ENCODE measurements at regions of chr14 and their contacts with region 1.

Region 1: GRCh38 chr14:54805521-54806322 is 96.9 kb downstream of the GCH1 start:
- DNase-seq: peak; percentile 84
- ATAC-seq: peak; percentile 86
- H3K4me3 ChIP-seq: no peak overlapping the region
- H3K4me3 Mint-ChIP-seq: no peak overlapping the region
- H3K27ac ChIP-seq: no peak overlapping the region
- H3K27ac Mint-ChIP-seq: no peak overlapping the region
- H3K4me1 ChIP-seq: peaks cover 5 to 7% of the 10 kb centered on the region in 2 donors
- H3K4me1 Mint-ChIP-seq: peaks cover 6% of the 10 kb centered on the region
- H3K27me3 ChIP-seq: peaks cover 0 to 6% (median 0%) of the 10 kb centered on the region in 4 experiments
- H3K27me3 Mint-ChIP-seq: peaks cover 20% of the 10 kb centered on the region
- CTCF ChIP-seq: peak; percentile 94

Region 2: GRCh38 chr14:54528973-54529372 is 276.7 kb before region 1 on chr14:
- CTCF ChIA-PET with region 1: no interaction called
- POLR2A ChIA-PET with region 1: no interaction called
- intact Hi-C with region 1: no loop called
- DNase-seq: no peak
- ATAC-seq: no peak
- H3K4me3 ChIP-seq: no peak overlapping the region
- H3K4me3 Mint-ChIP-seq: no peak overlapping the region
- H3K27ac ChIP-seq: no peak overlapping the region
- H3K27ac Mint-ChIP-seq: no peak overlapping the region
- H3K4me1 ChIP-seq: peaks cover 0 to 5% of the 10 kb centered on the region in 2 donors
- H3K4me1 Mint-ChIP-seq: peaks cover 10% of the 10 kb centered on the region
- H3K27me3 ChIP-seq: no peaks in the 10 kb centered on the region
- H3K27me3 Mint-ChIP-seq: no peaks in the 10 kb centered on the region
- CTCF ChIP-seq: no peak

Region 3: DNA sequence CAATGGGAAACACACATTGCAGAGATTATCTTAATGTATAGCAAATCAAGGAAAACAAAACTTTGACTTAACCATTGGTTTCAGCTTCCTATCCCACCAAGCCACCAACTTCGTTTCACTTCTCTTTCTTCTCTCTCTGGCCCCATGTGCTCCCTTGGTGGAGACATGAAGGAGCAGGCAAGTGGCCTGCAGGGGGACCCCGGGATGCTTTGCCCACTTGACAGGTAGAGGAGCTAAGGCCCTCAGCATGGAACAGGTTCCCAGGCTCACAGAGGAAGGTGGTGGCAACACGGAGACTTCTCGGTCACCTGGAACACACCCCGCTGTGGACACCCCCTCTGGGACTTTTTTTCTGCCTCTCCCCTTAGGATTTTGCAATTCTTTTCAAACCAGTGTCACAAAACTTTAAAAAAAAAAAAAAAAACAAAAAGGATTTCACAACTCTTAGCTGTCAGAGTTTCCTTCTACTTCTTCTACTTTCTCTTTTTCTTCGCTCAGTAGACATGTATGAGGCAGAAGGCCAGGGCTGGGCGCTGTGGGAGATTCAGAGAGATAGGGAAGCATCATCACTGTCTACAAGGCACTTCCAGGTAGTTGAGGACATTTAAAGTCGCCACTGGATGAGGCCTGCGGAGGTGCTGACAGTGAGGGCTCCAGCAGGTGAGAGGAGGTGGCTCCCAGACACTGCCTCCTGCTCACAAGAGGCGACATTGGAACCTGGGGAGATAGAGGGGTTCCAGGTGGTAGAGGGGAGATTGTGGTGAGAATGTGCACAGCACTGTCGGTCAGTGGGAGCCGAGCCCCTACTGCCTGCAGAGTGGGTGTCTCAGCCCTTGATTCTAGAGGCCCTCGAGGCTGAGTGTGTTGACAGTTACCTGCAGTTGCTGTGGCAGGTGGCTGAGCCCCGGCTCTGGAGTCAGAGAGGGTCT is 22.7 kb before region 1 on chr14:
- CTCF ChIA-PET with region 1: interaction called, 27 read pairs
- POLR2A ChIA-PET with region 1: no interaction called
- intact Hi-C with region 1: no loop called
- DNase-seq: peak; percentile 76
- ATAC-seq: peak; percentile 83
- H3K4me3 ChIP-seq: no peak overlapping the region
- H3K4me3 Mint-ChIP-seq: peak overlapping the region; percentile 23
- H3K27ac ChIP-seq: no peak overlapping the region
- H3K27ac Mint-ChIP-seq: peak overlapping the region; percentile 1
- H3K4me1 ChIP-seq: peaks cover 14 to 21% of the 10 kb centered on the region in 2 donors
- H3K4me1 Mint-ChIP-seq: peaks cover 28% of the 10 kb centered on the region
- H3K27me3 ChIP-seq: no peaks in the 10 kb centered on the region
- H3K27me3 Mint-ChIP-seq: no peaks in the 10 kb centered on the region
- CTCF ChIP-seq: peak; percentile 38